Activated T-helper 1 cell treated with anti-CD3 and anti-CD28 coated beads, Interleukin-12 subunit alpha, Interleukin-12 subunit beta, Interleukin-2, Interleukin-4 antibody, amounts not matched to agents 30 ng/mL and 10 ng/mL and 1 ng/mL, durations not matched to agents 14 hours and 24 hours and 36 hours (primary cell): ENCODE measurements at regions of chr3 and their contacts with region 1.

Region 1: DNA sequence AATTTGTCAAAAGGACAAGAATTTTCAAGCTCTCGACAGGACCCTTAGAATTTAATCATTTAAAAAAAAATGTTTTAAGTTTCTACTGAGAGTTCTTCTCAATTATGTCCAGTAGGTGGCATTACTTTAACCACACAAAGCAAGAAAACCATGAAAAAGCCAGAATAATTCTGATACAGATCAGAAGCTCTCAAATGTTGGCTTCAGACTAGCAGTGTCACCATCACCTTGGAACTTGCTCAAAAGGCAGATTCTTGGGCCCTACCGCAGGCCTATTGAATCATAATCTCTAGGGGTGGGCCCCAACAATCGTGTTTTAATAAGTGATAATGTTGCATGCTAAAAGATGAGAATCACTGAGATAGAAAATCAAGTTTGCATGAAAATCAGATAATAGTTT is 99.5 kb upstream of the KCNMB2 start:
- DNase-seq: no peak
- H3K4me3 Mint-ChIP-seq: no peak overlapping the region
- H3K27ac Mint-ChIP-seq: no peak overlapping the region
- H3K4me1 Mint-ChIP-seq: no peaks in the 10 kb centered on the region
- H3K27me3 Mint-ChIP-seq: no peaks in the 10 kb centered on the region

Region 2: DNA sequence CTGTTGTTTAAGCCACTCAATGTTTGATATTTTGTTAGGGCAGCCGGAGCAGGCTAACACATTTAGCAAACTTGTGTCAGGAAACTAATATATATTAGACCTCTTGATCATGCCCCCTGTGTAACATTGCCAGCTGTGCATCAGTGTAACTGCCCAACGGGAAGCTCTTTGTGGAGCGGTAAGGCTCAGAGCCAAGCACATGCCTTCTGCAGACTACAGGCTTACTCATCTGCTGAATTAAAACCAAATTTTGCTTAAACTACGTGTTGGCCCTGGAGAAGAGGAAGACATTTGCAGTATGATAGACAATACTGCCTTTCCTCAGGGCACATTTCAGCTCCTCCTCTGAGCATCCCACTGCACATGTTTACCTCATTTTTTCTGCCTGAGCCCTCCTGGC is 49.0 kb after region 1 on chr3:
- intact Hi-C with region 1: no loop called
- DNase-seq: no peak
- H3K4me3 Mint-ChIP-seq: no peak overlapping the region
- H3K27ac Mint-ChIP-seq: no peak overlapping the region
- H3K4me1 Mint-ChIP-seq: no peaks in the 10 kb centered on the region
- H3K27me3 Mint-ChIP-seq: no peaks in the 10 kb centered on the region

Region 3: GRCh38 chr3:178966299-178967176 is 529.8 kb after region 1 on chr3:
- intact Hi-C with region 1: loop called (anchors 2 kb)
- DNase-seq: no peak
- H3K4me3 Mint-ChIP-seq: no peak overlapping the region
- H3K27ac Mint-ChIP-seq: no peak overlapping the region
- H3K4me1 Mint-ChIP-seq: peaks cover 7% of the 10 kb centered on the region
- H3K27me3 Mint-ChIP-seq: peaks cover 2% of the 10 kb centered on the region